Gastrocnemius medialis (tissue), 4 donors: ENCODE measurements at regions of chr2 and their contacts with region 1.

Region 1: DNA sequence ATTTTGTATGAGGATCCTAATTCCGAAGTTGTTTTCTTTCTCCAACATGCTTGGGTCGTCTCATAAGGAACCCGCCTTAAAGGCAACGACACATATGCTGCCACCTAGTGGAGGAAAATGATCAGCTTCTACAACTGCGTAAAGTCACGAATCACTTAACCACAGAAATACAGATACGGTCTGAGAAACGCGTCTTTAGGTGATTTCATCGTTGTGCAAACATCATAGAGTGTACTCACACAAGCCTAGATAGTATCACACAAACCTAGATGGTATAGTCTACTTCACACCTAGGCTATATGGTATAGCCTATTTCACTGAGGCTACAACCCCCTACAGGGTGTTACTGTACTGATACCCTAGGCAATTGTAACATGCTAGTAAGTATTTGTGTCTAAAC is 13.1 kb downstream of the GNLY start:
- DNase-seq: peak; percentile 72 to 79
- ATAC-seq: peak; percentile 42 to 52
- H3K4me3 ChIP-seq: no peak overlapping the region
- H3K27ac ChIP-seq: peak overlapping the region; percentile 92 to 97 (median 95)
- H3K4me1 ChIP-seq: peaks cover 62 to 81% of the 10 kb centered on the region in 2 donors
- H3K27me3 ChIP-seq: no peaks in the 10 kb centered on the region
- CTCF ChIP-seq: peak; percentile 89 to 92 (median 91)
- POLR2A ChIP-seq: no peak

Region 2: DNA sequence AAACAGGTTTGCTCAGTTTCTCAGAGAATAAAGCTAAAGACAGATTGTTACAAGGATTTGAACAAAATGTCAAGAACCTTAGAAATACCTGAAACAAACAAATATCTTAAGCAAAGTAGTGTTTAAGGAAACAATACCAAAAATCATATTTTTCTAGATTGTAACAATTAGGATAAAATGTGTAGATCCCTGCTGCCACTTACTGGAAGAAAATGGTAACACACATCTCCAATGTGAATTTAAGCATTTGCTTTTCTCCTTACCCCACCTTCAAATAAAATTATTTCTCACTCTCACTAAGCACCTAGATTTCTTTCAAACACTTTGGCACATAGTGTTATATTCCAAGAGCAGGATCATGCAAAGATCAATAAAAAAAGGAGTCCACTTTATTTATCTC is 1283.2 kb before region 1 on chr2:
- in situ Hi-C with region 1: no loop called
- intact Hi-C with region 1: no loop called
- DNase-seq: no peak
- ATAC-seq: no peak
- H3K4me3 ChIP-seq: no peak overlapping the region
- H3K27ac ChIP-seq: no peak overlapping the region
- H3K4me1 ChIP-seq: no peaks in the 10 kb centered on the region
- H3K27me3 ChIP-seq: no peaks in the 10 kb centered on the region
- CTCF ChIP-seq: no peak
- POLR2A ChIP-seq: no peak

Region 3: DNA sequence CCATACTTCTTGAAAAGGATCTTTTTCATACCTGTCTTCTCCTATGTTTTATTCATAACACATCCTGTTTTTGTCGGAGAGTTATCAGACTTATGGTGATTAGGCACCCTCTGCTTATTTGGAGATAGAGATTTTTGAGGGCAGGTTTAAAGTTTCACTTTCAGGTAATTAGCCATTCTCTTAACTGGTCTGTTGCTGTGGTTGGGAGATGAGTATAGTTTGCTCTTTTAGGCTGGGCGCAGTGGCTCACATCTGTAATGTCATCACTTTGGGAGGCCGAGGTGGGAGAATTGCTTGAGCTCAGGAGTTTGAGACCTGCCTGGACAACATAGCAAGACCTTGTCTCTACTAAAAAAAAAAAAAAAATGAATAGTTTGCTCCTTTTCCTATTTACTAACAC is 64.6 kb before region 1 on chr2:
- in situ Hi-C with region 1: no loop called
- intact Hi-C with region 1: loop called (anchors 1 kb)
- DNase-seq: peak in 1 of 2 donors; percentile 1
- ATAC-seq: no peak
- H3K4me3 ChIP-seq: no peak overlapping the region
- H3K27ac ChIP-seq: peak overlapping the region in 3 of 4 donors; percentile 77 to 92 (median 87)
- H3K4me1 ChIP-seq: peaks cover 8 to 11% of the 10 kb centered on the region in 2 donors
- H3K27me3 ChIP-seq: no peaks in the 10 kb centered on the region
- CTCF ChIP-seq: no peak
- POLR2A ChIP-seq: no peak

Region 4: DNA sequence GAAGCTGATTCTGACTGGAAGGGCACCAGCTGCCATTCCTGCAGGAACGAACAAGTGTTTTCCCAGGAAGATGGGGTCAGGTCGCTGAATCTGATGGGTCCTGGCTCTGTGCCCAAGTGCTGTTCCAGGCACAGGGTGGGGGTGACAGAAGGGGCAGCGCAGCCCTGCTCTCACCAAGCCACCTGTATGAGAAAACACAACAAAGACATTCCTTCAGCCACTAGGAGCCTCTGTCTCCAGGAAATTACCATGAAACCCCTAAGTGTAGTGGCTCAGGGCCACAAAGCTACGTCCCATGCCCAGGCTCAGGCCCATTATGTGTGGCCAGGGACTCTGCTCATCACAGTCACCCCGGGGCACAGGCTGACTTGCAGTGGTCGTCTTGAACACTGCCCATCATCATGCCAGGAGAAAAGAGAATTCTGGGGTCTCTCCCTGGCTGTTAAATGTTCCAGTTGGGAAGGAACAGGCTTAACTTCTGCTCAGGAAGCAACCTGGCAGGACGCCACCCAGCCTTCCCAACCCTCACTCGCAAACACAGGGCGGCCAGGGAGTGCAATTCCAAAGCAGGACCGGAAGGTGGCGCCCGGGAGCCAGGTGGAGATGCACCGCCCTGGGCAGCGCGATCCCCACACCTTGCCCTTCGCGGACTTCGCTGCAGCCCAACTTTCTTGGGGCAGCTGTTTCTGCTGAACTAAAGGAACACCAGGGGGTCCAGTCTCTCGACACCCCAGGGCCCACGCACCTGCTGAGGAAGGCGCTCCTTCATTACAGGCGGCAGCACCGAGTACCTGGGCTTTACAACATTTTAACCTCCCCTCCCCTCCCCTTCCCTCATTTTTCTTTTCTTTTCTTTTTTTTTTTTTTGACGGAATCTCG is 28.3 kb before region 1 on chr2:
- in situ Hi-C with region 1: no loop called
- intact Hi-C with region 1: loop called (anchors 1 kb)
- DNase-seq: peak; percentile 86 to 94
- ATAC-seq: peak; percentile 38 to 50
- H3K4me3 ChIP-seq: no peak overlapping the region
- H3K27ac ChIP-seq: peak overlapping the region; percentile 87 to 93 (median 90)
- H3K4me1 ChIP-seq: peaks cover 45 to 57% of the 10 kb centered on the region in 2 donors
- H3K27me3 ChIP-seq: no peaks in the 10 kb centered on the region
- CTCF ChIP-seq: peak; percentile 98 to 100 (median 99)
- POLR2A ChIP-seq: no peak

Region 5: DNA sequence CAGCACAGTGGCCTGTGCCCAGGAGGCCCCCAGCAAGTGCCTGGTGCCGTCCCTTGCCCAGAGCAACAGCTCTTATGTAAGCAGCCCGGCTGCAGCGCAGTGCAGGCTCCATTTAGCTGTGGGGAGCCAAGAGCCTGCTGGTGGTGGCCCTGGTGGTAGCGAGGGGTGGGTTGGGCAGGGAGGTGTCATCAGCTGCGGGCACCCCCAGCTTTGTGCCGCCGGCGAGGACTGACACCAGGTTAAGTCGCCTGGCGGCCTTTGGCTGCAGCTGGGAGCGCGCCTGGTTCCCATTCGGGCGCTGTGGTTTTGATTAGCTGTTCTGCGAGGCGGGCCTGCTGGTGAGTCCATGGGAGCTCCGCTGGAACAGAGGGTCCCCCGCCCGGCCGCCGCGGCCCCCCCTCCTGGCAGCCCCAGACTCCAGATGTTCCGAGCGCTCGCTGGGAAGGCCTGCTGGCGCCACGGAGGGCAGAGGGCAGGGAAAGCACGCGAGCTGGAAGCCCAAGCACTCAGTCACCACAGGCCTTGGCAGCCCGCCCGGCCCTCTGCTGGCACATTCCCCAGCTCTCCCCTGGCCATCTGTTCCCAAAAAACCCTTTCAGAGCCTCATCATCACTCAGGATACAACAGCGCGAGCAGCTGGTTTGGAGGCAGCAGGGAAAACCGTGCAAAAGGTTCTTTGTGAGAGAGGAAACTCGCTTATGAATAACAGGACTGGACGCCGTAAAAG is 64.9 kb after region 1 on chr2:
- in situ Hi-C with region 1: no loop called
- intact Hi-C with region 1: loop called (anchors 2 kb)
- DNase-seq: peak; percentile 97 to 99
- ATAC-seq: peak; percentile 72 to 84
- H3K4me3 ChIP-seq: peak overlapping the region; percentile 38 to 55 (median 41)
- H3K27ac ChIP-seq: peak overlapping the region; percentile 84 to 97 (median 92)
- H3K4me1 ChIP-seq: peaks cover 95% of the 10 kb centered on the region in 2 donors
- H3K27me3 ChIP-seq: no peaks in the 10 kb centered on the region
- CTCF ChIP-seq: peak in 2 of 5 experiments; percentile 20 to 44
- POLR2A ChIP-seq: peak; percentile 53 to 60